Colonic mucosa (tissue), 4 donors: ENCODE measurements at regions of chr17 and their contacts with region 1.

Region 1: DNA sequence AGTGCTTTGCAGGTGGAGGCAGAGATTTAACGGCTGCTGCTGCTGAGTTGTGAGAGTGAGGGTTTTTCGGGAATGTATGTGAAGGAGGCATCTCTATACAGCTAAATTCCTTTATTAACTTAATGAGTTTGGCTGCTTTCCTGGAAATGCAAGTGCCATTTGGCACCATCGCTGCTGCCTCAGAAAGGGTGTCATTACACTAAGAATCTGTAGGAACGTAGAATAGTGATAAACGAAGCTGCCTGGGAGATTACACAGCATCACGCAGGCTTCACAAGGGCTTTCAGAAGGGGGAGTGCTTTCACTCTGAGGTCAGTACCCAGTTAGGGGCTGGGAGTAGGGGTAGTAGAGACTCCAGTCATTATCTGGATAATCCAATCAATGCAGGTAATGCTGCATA is 14.1 kb upstream of the NLRP1 start:
- DNase-seq: no peak
- H3K4me3 ChIP-seq: no peak overlapping the region
- H3K27ac ChIP-seq: no peak overlapping the region
- H3K4me1 ChIP-seq: no peaks in the 10 kb centered on the region
- H3K27me3 ChIP-seq: no peaks in the 10 kb centered on the region
- CTCF ChIP-seq: no peak

Region 2: DNA sequence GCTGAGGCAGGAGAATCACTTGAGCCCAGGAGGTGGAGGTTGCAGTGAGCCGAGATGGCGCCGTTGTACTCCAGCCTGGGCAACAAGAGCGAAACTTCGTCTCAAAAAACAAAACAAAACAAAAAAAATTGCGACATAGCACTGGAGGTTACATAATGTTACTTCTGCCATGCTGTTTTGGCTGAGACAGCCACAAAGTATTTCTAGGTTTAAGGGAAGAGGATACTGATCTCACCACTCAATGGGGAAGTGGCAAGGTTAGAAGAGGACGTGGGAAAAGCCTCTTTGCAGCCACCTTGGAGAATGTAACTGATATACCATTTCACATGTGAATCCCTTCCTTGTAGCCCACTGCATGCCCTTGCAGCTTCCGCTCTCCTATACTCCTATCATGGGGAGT is 117.0 kb after region 1 on chr17:
- intact Hi-C with region 1: no loop called
- DNase-seq: no peak
- H3K4me3 ChIP-seq: no peak overlapping the region
- H3K27ac ChIP-seq: no peak overlapping the region
- H3K4me1 ChIP-seq: no peaks in the 10 kb centered on the region
- H3K27me3 ChIP-seq: no peaks in the 10 kb centered on the region
- CTCF ChIP-seq: no peak

Region 3: GRCh38 chr17:6279659-6280058 is 681.2 kb after region 1 on chr17:
- intact Hi-C with region 1: loop called (anchors 5 kb)
- DNase-seq: peak; percentile 60
- H3K4me3 ChIP-seq: no peak overlapping the region
- H3K27ac ChIP-seq: no peak overlapping the region
- H3K4me1 ChIP-seq: no peaks in the 10 kb centered on the region
- H3K27me3 ChIP-seq: no peaks in the 10 kb centered on the region
- CTCF ChIP-seq: peak; percentile 21